PC-9 (cell line): ENCODE measurements at regions of chr1 and their contacts with region 1.

Region 1: DNA sequence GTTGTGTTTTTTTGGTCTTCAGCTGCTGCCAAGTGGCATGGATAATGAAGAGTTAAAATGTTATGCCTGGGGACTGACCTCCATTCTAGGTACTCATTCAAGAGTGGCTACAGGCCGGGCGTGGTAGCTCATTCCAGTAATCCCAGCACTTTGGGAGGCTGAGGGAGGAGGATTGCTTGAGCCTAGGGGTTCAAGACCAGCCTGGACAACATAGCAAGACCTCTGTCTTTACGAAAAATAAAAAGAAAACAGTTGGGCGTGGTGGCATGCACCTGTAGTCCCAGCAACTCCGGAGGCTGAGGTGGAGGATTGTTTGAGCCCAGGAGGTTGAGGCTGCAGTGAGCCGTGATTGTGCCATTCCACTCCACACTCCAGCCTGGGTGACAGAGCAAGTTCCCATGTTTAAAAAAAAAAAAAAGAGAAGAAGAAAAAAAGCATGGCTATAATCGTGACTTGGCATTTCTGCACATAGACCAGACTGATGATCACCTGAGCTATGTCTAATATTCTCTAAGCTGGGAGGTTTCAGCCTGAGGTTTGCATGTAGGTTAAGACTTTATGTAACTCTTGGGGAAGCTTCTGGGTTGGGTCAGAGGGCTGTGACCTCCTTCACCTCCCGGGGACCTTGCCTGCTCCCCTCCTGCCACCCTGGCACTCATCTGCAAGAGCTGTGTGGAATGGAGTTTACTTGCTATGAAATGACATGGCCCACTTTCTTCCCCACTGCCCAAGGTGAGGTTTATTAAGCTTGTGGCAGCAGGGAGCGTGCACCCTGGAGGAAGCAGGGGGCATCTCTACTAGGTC is 51.3 kb downstream of the DHRS3 start:
- DNase-seq: no peak
- H3K4me3 ChIP-seq: no peak overlapping the region
- H3K27ac ChIP-seq: peak overlapping the region; percentile 39
- H3K4me1 ChIP-seq: no peaks in the 10 kb centered on the region
- H3K27me3 ChIP-seq: no peaks in the 10 kb centered on the region
- CTCF ChIP-seq: no peak

Region 2: GRCh38 chr1:12386130-12386529 is 180.6 kb before region 1 on chr1:
- CTCF ChIA-PET with region 1: no interaction called
- POLR2A ChIA-PET with region 1: interaction called, 11 read pairs
- intact Hi-C with region 1: no loop called
- DNase-seq: peak; percentile 52 to 83
- H3K4me3 ChIP-seq: no peak overlapping the region
- H3K27ac ChIP-seq: peak overlapping the region; percentile 64
- H3K4me1 ChIP-seq: peaks cover 37% of the 10 kb centered on the region
- H3K27me3 ChIP-seq: no peaks in the 10 kb centered on the region
- CTCF ChIP-seq: no peak

Region 3: GRCh38 chr1:12528021-12528852 is 38.4 kb before region 1 on chr1:
- CTCF ChIA-PET with region 1: no interaction called
- POLR2A ChIA-PET with region 1: no interaction called
- intact Hi-C with region 1: no loop called
- DNase-seq: peak; percentile 37 to 82
- H3K4me3 ChIP-seq: no peak overlapping the region
- H3K27ac ChIP-seq: peak overlapping the region; percentile 62
- H3K4me1 ChIP-seq: peaks cover 49% of the 10 kb centered on the region
- H3K27me3 ChIP-seq: no peaks in the 10 kb centered on the region
- CTCF ChIP-seq: no peak